Right ventricle myocardium inferior (tissue), 1 donor: ENCODE measurements at regions of chr10 and their contacts with region 1.

Region 1: DNA sequence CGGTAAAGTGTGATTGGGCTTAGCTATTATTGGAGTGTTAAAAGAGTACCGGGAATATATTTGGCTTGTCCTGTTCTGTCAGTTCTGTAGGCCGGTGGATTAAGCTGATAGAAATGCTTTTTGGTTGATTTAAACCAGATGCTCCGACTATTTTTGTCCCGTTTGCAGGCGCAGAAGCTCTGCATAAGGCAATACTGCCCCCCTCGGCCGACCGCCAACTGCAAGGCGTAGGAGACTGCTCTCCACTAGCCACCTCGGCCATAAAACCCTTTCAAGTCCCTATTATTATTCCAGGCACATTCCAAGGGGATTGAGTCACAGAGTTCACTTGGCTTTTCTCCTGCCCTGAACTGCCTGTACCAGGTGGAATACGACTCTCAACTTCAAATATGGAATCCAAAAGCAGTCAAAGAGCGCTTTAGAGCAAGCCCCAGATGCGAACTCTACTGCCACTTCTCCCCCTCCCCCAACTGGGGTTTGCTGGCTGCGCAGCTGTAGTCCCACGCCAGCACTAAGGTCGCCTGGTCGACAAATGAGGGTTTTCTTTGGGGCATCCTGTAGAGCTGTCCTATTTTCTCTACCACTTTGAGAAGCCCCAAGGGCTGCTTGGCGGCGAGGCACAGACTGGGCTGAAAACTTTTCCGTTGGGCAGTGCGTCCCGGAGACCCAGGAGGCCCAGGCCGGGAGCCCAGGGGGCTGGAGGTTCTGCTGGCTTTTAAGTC is 108.3 kb downstream of the REEP3 start:
- DNase-seq: peak; percentile 97
- ATAC-seq: peak; percentile 82

Region 2: GRCh38 chr10:63217120-63217605 is 412.4 kb before region 1 on chr10:
- intact Hi-C with region 1: loop called (anchors 2 kb)
- DNase-seq: no peak
- ATAC-seq: peak; percentile 86

Region 3: GRCh38 chr10:63465293-63466143 is 164.0 kb before region 1 on chr10 and contains the start of gene JMJD1C:
- intact Hi-C with region 1: loop called (anchors 1 kb)
- DNase-seq: peak; percentile 91
- ATAC-seq: peak; percentile 93
- total RNA-seq, gene JMJD1C: 38.1 TPM

Region 4: GRCh38 chr10:63588436-63589167 is 40.9 kb before region 1 on chr10:
- intact Hi-C with region 1: no loop called
- DNase-seq: no peak
- ATAC-seq: no peak

Region 5: DNA sequence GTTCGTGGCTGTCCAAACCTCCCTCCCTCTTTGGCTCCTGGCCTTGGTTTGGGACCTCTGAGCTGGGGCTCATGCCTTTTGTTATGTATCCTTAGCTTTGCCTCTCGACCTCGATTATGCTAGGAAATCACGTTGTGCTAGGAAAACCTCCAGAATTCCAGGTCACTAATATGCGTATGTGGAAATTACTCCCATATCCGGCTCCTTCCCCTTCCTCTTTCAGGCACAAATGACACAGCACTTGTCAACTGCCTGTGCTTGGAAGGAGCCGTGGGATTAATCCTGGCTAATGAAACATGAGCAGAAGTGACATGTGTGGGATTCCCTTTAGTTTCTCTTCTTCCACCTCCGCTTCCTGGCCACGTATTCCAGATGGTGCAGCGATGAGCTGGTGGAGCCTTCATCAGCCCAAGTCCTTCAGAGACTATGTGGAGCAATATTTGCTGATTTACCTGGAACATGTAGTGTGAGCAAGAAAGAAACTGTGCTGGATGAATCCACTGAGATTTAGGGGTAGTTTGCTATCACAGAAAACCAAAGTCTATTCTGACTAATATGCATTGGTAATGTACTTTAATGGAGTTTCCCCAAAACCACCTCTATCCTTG is 40.9 kb after region 1 on chr10:
- intact Hi-C with region 1: loop called (anchors 2 kb)
- DNase-seq: no peak
- ATAC-seq: peak; percentile 65

Region 6: DNA sequence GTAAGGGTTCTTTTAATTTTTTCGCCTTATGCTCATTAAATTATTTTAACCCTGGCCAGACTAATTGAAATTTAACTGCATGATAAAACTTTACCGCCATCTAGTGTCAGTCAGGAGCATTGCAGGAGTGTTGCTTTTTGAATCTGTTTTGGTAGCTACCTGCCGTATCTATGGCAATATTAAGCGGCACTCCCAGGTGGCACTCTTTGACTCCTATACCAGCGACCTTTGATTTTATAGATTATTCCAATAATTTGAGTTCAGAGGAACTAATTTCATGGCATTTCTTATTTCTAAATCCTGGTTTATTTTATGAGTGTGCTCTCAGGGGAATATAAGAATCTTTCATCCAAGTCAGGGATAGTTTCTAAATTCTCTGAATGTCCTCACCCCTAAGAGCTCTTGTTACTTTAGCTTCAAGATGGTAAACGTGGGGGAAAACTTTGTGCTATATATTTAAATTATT is 90.6 kb after region 1 on chr10:
- intact Hi-C with region 1: loop called (anchors 2 kb)
- DNase-seq: no peak
- ATAC-seq: peak; percentile 44